ENCODE measurements at regions of chr7 and their contacts with region 1.

Region 1: DNA sequence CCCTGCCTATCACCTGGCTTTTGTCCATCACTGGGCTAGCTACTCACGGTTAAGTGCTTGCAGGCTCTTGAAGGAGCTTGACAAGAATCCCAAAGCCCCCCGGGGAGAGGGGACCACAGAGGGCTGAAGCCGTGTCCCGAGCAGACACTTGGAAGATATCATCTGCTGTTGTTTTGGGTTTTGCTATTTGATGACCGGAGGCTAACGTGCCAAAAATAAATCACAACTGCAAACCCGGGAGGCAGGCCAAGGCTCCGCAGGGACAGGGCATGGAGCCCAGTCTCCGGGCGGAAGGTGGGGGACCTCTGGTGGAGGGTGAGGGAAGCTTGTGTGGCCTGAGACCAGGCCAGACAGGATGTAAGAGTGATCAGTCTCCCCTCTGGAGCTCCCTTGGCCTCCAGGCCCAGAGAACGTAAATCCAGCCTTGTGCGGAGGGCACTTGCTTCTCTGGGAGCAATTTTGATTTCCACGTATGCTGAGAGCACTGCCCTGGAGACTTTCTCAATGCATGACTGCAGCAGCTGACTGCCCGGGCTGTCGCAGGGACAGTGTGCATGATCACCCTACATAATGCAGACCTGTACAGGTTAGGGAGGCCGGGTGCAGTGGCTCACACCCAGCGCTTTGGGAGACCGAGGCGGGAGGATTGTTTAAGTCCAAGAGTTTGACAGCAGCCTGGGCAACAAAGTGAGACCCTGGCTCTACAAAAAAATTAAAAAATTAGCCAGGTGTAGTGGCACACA is at the start of gene PHKG1:
- DNase-seq: peak; percentile 85
- ATAC-seq: peak; percentile 86
- total RNA-seq, gene PHKG1: 31.2 TPM

Region 2: GRCh38 chr7:56051339-56052191 is 41.4 kb before region 1 on chr7 and contains the starts of genes CCT6A and PSPH:
- intact Hi-C with region 1: no loop called
- DNase-seq: peak; percentile 99
- ATAC-seq: peak; percentile 100
- total RNA-seq, gene CCT6A: 67.9 TPM
- total RNA-seq, gene PSPH: 10.6 TPM

Region 3: GRCh38 chr7:56079450-56080185 is 13.3 kb before region 1 on chr7:
- intact Hi-C with region 1: loop called (anchors 1 kb)
- DNase-seq: peak; percentile 91
- ATAC-seq: peak; percentile 88

Region 4: DNA sequence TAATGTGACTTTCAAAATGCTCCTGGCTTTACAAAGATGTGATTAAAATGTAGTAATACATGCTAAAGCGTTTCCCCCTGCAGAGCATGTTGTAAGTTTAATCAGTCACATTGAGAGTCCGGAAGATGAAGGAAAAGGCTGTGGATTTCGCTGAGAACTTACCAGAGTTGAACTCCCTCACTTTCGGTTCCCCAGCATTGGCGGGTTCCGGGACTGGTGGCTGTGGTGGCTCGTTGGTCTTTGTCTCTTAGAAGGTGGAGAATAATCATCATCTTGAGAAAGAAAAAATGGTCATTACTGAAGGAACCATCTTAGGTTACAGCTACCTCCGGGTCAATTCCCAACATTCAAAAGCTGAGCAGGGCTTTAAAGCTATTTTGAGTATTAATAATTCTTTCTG is 32.9 kb after region 1 on chr7:
- intact Hi-C with region 1: no loop called
- DNase-seq: no peak
- ATAC-seq: no peak